Stomach (tissue), 19 donors: ENCODE measurements at regions of chr16 and their contacts with region 1.

Region 1: GRCh38 chr16:72099377-72099818 is 5.8 kb downstream of the DHX38 start:
- DNase-seq: peak; percentile 41 to 83
- H3K4me3 ChIP-seq: no peak overlapping the region
- H3K27ac ChIP-seq: no peak overlapping the region
- H3K4me1 ChIP-seq: peaks cover 10 to 20% (median 14%) of the 10 kb centered on the region in 4 donors
- H3K27me3 ChIP-seq: no peaks in the 10 kb centered on the region
- CTCF ChIP-seq: peak in 5 of 7 experiments; percentile 32 to 59 (median 47)
- EP300 ChIP-seq: no peak
- POLR2A ChIP-seq: no peak

Region 2: GRCh38 chr16:71767060-71767900 is 332.1 kb before region 1 on chr16:
- intact Hi-C with region 1: no loop called
- DNase-seq: no peak
- H3K4me3 ChIP-seq: no peak overlapping the region
- H3K27ac ChIP-seq: peak overlapping the region in 1 of 5 donors; percentile 15
- H3K4me1 ChIP-seq: peaks cover 0 to 21% (median 2%) of the 10 kb centered on the region in 4 donors
- H3K27me3 ChIP-seq: no peaks in the 10 kb centered on the region
- CTCF ChIP-seq: no peak
- EP300 ChIP-seq: no peak
- POLR2A ChIP-seq: no peak

Region 3: DNA sequence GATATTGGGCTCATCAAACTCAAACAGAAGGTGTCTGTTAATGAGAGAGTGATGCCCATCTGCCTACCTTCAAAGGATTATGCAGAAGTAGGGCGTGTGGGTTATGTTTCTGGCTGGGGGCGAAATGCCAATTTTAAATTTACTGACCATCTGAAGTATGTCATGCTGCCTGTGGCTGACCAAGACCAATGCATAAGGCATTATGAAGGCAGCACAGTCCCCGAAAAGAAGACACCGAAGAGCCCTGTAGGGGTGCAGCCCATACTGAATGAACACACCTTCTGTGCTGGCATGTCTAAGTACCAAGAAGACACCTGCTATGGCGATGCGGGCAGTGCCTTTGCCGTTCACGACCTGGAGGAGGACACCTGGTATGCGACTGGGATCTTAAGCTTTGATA is 39.0 kb before region 1 on chr16:
- intact Hi-C with region 1: loop called (anchors 5 kb)
- DNase-seq: no peak
- H3K4me3 ChIP-seq: no peak overlapping the region
- H3K27ac ChIP-seq: no peak overlapping the region
- H3K4me1 ChIP-seq: no peaks in the 10 kb centered on the region
- H3K27me3 ChIP-seq: no peaks in the 10 kb centered on the region
- CTCF ChIP-seq: no peak
- EP300 ChIP-seq: no peak
- POLR2A ChIP-seq: no peak